Endothelial cell of umbilical vein (primary cell): ENCODE measurements at regions of chr12 and their contacts with region 1.

Region 1: DNA sequence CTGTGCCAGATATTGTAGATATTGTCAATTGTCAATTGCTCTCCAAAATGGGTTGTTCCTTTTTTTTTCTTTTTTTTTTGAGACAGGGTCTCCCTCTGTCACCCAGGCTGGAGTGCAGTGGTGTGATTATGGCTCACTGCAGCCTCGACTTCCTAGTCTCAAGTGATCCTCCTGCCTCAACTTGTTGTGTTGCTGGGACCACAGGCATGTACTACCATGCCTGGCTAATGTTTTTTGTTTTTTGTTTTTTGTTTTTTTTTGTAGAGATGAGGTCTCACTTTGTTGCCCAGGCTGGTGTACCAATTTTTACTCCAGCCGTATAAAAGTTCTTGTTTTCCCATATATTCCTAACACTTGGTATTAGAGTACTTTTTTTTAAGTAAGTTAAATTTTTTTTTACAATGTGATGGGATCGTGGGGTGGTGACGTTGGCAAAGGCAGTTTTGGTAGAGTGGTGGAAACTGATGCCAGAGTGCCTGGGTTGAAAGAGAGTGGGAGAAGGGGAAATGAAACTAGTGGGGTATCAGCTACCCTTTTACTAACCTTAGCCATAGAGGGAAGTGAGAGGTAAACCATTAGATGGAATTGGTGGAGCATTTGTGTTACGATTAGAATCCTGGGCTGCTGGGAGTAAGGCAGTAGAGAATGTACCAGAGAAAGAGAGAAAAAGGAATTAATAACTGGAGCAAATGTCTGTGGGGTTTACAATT is 33.0 kb upstream of the CFAP54 start:
- DNase-seq: no peak
- H3K4me3 ChIP-seq: no peak overlapping the region
- H3K27ac ChIP-seq: no peak overlapping the region
- H3K4me1 ChIP-seq: peaks cover 12% of the 10 kb centered on the region
- H3K27me3 ChIP-seq: no peaks in the 10 kb centered on the region
- CTCF ChIP-seq: no peak
- POLR2A ChIP-seq: no peak

Region 2: DNA sequence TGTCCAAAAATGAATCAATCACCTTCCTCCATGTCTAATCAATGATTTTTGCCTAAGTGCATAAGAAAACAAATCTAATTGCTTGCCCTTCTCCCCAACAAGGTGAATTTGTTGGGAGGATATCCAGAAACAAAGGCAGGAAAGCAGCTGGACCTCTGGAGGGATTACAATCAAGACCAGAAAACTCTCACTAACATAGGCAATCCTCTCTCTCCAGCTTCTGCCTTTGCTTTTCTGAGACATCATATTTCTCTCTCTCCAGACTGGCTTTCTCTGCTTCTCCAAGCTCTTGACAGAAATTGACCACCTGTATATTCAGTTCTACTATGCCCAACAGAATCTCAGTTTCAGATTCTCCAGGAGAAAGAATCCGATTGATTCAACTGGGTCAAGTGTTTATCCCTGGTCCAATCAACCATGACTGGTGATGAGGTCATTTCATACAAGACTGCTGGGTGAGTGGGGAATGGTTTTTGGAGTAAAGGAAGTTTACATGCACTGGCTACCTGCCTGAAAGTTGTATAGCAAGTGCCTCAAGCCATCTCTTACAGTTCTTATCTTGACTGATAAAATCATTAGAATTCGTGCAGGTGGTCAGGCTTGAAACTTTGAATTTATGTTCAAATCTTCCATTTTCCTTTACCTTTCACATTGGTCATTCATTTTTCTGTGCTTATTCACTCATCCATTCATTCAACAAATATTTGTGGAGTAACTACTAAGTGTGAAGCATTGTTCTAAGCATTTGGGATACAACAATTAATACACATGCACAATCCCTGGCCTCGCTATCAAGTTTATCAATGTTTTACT is 10.7 kb after region 1 on chr12:
- CTCF ChIA-PET with region 1: interaction called, 8 read pairs
- POLR2A ChIA-PET with region 1: interaction called, 9 read pairs
- dilution Hi-C with region 1: no loop called
- intact Hi-C with region 1: loop called (anchors 1 kb)
- DNase-seq: peak; percentile 64
- H3K4me3 ChIP-seq: no peak overlapping the region
- H3K27ac ChIP-seq: peak overlapping the region; percentile 34
- H3K4me1 ChIP-seq: peaks cover 18% of the 10 kb centered on the region
- H3K27me3 ChIP-seq: no peaks in the 10 kb centered on the region
- CTCF ChIP-seq: no peak
- POLR2A ChIP-seq: no peak